Breast epithelium (tissue), 4 donors: ENCODE measurements at regions of chr13 and their contacts with region 1.

Region 1: GRCh38 chr13:98706446-98707110 is 45.9 kb downstream of the SLC15A1 start:
- DNase-seq: no peak
- H3K4me3 ChIP-seq: no peak overlapping the region
- H3K27ac ChIP-seq: no peak overlapping the region
- H3K4me1 ChIP-seq: no peaks in the 10 kb centered on the region
- H3K27me3 ChIP-seq: no peaks in the 10 kb centered on the region
- CTCF ChIP-seq: no peak
- POLR2A ChIP-seq: no peak

Region 2: DNA sequence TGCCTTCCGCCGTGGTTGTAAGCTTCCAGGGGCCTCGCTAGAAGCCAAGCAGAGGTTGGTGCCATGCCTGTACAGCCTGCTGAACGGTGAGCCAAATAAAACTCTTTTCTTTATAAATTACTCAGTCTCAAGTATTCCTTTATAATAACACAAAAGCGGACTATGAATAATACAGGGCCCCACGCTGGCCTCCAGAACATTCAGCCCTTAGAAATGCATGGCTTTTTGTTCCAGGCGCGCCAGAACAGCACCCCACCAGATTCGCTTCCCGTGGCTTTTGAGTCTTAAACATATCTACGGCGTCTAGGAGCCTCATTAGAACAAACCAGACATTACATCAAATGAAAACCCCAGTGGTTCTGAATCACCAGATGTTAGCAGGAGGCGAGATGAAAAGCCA is 29.2 kb before region 1 on chr13:
- intact Hi-C with region 1: no loop called
- DNase-seq: no peak
- H3K4me3 ChIP-seq: no peak overlapping the region
- H3K27ac ChIP-seq: no peak overlapping the region
- H3K4me1 ChIP-seq: no peaks in the 10 kb centered on the region
- H3K27me3 ChIP-seq: no peaks in the 10 kb centered on the region
- CTCF ChIP-seq: no peak
- POLR2A ChIP-seq: no peak

Region 3: DNA sequence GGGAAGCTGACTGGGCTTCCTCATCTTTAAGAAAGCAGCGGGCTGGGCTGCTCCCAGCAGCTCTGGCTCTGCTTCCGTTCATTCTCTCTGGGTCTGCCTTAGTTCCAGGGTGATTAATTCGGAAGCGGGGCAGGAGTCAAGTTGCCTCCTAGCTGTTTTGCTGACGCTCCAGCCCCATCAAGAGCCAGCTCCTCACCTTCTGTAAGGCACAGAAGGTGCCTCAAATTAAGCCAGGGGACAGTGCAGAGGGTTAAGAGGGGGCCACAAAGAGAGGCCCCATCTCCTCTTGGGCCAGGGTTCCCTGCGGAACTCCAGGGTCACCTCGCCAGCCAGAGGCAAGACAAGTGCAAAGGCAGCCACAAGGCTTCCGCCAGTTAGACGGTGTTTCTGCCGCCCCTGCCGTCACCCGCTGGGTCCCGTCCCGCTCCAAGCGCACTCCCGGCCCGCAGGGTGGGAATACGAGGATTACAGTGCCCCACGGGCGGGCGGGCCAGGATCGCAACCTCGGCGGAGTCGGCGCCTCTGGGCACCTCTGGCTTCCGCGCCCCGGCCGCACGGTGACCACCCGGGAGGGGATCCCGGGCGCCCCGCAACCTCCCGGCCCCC is 45.4 kb after region 1 on chr13:
- intact Hi-C with region 1: no loop called
- DNase-seq: no peak
- H3K4me3 ChIP-seq: peak overlapping the region; percentile 26 to 72 (median 46)
- H3K27ac ChIP-seq: no peak overlapping the region
- H3K4me1 ChIP-seq: peaks cover 0 to 5% of the 10 kb centered on the region in 2 donors
- H3K27me3 ChIP-seq: peaks cover 5 to 25% of the 10 kb centered on the region in 2 donors
- CTCF ChIP-seq: no peak
- POLR2A ChIP-seq: no peak

Region 4: DNA sequence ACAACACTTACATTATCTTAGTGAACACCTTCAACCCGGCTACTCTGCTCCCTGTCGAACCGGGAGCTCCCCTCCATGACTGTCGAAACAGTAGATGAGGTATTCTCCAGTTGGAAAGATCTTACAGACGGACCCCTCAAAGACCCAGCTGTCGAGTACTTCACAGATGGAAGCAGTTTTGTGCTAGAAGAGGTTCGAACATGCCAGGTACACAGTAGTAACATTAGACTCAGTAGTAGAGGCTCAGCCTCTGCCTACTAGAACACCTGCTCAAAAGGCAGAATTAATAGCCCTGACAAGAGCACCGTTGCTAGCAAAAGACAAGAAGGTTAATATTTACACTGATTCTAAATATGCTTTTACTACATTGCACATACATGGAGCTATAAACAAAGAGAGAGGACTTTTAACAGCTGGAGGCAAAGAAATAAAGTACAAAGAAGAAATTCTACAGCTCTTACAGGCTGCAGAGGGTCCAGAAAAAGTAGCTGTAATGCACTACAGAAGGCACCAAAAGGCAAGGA is 59.5 kb after region 1 on chr13:
- intact Hi-C with region 1: loop called (anchors 2 kb)
- DNase-seq: no peak
- H3K4me3 ChIP-seq: no peak overlapping the region
- H3K27ac ChIP-seq: no peak overlapping the region
- H3K4me1 ChIP-seq: no peaks in the 10 kb centered on the region
- H3K27me3 ChIP-seq: no peaks in the 10 kb centered on the region
- CTCF ChIP-seq: no peak
- POLR2A ChIP-seq: no peak